ENCODE measurements at regions of chr17 and their contacts with region 1.

Region 1: DNA sequence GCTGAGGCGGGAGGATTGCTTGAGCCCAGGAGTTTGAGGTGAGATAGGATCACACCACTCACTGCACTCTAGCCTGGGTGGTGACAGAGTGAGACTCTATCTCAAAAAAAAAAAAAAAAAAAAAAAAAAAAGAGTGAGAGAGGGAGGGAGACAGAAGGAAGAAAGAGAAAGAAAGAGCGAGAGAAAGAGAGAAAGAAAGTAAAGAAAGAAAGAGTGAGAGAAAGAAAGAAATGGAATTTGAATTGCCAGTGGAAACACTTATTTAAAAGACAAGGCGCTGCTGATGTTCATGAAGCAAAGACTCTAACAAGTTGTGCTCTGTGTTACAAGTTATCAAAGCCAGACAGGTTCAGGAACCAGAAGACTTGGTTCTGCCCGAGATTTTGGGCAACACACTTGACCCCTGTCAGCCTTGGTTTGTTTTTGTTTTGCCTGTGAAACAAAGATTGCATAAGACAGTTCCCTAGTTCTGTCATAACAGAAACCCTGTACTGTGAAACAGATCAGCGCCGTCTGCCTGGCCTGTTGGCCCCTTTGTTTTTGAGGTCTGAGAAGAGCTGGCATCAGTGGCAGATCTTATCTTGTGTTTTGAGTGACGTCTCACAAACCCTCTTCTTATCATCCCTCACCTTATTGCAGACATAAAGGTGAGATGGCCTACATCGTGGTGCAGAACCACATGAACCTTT is 55.4 kb upstream of the ENDOV start:
- DNase-seq: no peak
- H3K4me3 ChIP-seq: no peak overlapping the region
- H3K27ac ChIP-seq: no peak overlapping the region
- H3K27me3 ChIP-seq: no peaks in the 10 kb centered on the region
- CTCF ChIP-seq: no peak

Region 2: DNA sequence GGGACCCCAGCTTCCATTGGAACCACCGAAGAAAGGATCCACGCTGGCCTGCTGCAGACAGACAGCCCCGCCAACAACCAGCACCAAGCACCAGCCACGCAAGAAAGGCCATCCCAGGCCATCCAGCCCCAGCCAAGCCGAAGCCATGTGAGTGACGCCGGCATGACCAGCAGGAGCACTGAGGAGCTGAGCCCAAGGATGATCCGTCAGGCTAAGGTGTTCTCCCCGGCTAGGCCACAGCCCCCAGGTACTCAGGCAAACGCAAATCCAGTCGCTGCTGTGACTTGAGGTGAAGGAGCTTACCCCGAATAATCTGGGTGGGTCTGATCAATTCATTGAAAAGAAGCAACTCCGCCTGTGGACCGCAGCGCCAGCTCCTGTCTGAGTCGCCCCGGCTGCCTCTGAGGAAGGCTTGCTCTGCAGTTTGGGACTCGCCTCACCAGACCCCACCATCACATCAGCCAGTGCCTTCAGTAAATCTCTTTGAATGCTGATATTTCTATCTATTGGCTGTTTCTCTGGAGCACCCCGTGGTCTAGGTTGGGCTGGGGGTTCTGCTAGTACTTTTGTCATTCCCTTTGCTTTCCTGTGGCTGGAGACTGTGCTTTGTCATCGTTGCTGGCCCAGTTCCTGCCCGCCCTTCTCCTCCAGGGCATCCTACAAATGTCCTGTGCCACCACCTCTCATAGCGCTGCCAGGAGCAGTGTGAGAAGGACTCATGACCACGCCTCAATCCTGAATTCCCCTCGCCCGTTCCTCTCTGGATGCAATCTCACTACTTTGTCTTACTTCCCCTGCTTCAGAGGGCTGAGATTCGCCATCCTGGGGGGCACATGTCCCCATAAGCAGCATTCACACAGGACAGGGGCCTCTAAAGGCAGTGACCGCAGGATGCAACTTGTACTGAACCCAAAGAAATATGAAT is 589.7 kb before region 1 on chr17:
- CTCF ChIA-PET with region 1: no interaction called
- POLR2A ChIA-PET with region 1: interaction called, 10 read pairs
- DNase-seq: no peak
- H3K4me3 ChIP-seq: no peak overlapping the region
- H3K27ac ChIP-seq: no peak overlapping the region
- H3K27me3 ChIP-seq: peaks cover 36% of the 10 kb centered on the region
- CTCF ChIP-seq: no peak

Region 3: DNA sequence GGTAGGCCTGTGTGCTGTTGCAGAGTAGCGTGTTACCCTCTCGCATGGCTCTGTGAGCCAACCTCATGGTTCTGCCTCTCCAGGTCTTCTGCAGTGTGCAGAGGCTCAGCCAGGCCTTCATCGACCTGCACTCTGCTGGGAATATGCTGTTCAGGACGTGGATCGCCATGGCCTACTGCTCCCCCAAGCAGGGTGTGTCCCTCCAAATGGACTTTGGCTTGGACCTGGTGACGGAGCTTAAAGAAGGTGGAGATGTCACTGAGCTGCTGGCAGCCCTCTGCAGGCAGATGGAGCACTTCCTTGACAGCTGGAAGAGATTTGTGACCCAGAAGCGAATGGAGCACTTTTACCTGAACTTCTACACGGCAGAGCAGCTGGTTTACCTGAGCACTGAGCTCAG is 20.4 kb before region 1 on chr17:
- CTCF ChIA-PET with region 1: no interaction called
- POLR2A ChIA-PET with region 1: no interaction called
- DNase-seq: no peak
- H3K4me3 ChIP-seq: no peak overlapping the region
- H3K27ac ChIP-seq: no peak overlapping the region
- H3K27me3 ChIP-seq: no peaks in the 10 kb centered on the region
- CTCF ChIP-seq: no peak

Region 4: DNA sequence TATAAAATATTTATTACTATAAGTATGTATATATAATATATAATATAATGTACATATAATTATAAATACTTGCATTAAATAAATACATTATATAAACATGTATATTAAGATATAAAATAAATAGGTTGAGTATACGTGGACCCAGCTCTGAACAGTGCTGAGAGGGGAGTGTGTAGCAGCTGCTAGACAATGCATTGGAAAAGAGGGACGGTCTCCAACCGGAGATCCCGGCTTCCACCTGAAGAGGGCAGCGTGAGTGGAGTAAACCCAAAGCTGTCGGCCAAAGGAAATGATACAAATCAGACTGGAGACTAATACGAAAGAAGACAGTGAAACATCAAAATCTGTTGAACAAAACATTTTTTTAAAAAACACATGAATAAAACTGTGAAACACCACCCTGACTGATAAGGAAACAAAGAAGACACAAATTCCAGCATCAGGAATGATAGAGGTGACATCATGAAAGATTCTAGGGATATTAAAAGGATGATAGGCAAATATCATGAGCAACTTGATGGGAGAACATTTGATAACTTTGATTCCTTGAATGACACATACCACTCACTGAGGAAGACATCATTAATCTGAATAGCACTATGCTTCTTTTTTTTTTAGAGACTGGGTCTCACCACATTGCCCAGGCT is 506.7 kb after region 1 on chr17:
- CTCF ChIA-PET with region 1: no interaction called
- POLR2A ChIA-PET with region 1: no interaction called
- DNase-seq: peak; percentile 24
- H3K4me3 ChIP-seq: no peak overlapping the region
- H3K27ac ChIP-seq: no peak overlapping the region
- H3K27me3 ChIP-seq: no peaks in the 10 kb centered on the region
- CTCF ChIP-seq: peak; percentile 88